ENCODE measurements at regions of chr7 and their contacts with region 1.

Region 1: GRCh38 chr7:76291343-76292212 is 10.9 kb upstream of the HSPB1 start:
- DNase-seq: peak; percentile 99
- ATAC-seq: peak; percentile 90
- H3K4me3 ChIP-seq: peak overlapping the region; percentile 24 to 47
- H3K27ac ChIP-seq: peak overlapping the region; percentile 96
- H3K4me1 ChIP-seq: peaks cover 54% of the 10 kb centered on the region
- H3K27me3 ChIP-seq: no peaks in the 10 kb centered on the region
- CTCF ChIP-seq: peak; percentile 95

Region 2: DNA sequence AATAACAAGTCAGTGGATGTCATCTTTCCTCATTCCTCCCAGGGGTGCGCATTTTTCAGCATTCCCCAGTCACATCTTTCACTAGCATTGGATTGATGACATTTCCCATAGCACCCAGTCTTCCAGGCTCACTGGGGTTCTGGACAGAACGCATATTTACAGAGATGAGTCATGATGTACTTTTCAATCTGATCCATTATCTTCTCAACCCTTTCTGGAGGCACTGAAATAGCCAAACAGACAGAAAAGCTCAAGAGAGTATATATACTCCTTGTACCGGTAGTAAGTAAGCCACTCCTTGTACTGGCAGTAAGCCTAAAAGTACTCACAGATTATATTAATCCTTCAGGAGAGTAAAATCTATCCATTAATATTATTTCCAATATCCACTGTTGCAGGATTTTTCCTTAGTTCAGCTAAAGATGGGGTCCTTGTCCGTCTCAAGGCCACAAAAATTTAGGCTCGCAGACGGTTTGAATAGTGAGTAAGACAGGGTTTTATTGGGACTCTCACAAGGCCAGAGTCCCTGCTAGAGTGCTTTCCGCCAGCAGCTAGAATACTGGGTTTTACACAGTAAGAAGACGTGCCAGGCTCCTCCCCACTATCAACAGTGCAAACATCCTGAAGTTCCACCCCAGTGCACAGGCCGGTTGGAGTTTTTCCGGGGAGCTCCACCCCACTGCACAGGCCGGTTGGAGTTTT is 182.9 kb before region 1 on chr7:
- CTCF ChIA-PET with region 1: no interaction called
- POLR2A ChIA-PET with region 1: no interaction called
- in situ Hi-C with region 1: no loop called
- intact Hi-C with region 1: no loop called
- DNase-seq: peak; percentile 85
- ATAC-seq: peak; percentile 95
- H3K4me3 ChIP-seq: peak overlapping the region; percentile 42 to 55
- H3K27ac ChIP-seq: peak overlapping the region; percentile 97
- H3K4me1 ChIP-seq: peaks cover 38% of the 10 kb centered on the region
- H3K27me3 ChIP-seq: no peaks in the 10 kb centered on the region
- CTCF ChIP-seq: no peak

Region 3: DNA sequence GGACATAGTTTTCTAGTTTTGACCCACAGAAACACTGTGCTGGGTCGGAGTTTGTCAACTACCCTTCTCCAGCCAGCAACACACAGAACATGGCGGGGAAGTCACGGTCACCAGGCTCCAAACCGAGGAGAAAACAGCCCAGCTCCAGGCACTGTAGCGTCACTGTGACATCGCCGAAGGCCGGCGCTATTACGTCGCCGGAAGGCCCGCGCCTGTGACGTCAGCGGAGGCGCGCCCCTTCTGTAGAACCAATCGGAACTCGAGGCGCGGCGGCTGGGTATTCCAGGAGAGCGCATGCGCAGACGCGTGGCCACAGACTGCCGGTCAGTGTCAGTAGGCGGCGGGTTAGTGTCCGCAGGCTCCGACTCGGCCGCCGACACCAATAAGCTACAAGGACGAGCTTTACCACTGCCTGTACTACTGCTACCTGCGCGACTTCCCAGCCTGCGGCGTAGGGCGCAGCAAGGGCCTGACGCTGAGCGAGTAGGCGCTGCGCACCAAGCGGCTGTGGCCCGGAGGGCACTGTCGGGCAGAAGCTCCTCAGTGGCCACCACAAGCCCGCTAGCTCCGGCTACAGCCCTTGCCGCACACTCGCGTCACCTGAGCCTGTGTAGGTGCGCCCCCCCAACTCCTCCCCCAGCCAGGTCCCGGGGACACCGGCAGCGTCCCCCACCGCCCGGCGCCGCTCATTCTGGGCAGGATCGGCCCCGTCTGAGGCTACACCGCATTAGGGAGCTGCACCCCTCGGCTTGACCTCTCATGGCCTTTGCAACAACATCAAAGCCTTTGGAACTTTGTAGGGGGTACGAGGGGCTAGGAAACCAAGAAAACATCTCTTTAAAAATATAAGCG is 124.9 kb before region 1 on chr7:
- CTCF ChIA-PET with region 1: interaction called, 18 read pairs
- POLR2A ChIA-PET with region 1: no interaction called
- in situ Hi-C with region 1: no loop called
- intact Hi-C with region 1: no loop called
- DNase-seq: peak; percentile 92
- ATAC-seq: peak; percentile 97
- H3K4me3 ChIP-seq: peak overlapping the region; percentile 65 to 75
- H3K27ac ChIP-seq: peak overlapping the region; percentile 85
- H3K4me1 ChIP-seq: no peaks in the 10 kb centered on the region
- H3K27me3 ChIP-seq: no peaks in the 10 kb centered on the region
- CTCF ChIP-seq: no peak

Region 4: DNA sequence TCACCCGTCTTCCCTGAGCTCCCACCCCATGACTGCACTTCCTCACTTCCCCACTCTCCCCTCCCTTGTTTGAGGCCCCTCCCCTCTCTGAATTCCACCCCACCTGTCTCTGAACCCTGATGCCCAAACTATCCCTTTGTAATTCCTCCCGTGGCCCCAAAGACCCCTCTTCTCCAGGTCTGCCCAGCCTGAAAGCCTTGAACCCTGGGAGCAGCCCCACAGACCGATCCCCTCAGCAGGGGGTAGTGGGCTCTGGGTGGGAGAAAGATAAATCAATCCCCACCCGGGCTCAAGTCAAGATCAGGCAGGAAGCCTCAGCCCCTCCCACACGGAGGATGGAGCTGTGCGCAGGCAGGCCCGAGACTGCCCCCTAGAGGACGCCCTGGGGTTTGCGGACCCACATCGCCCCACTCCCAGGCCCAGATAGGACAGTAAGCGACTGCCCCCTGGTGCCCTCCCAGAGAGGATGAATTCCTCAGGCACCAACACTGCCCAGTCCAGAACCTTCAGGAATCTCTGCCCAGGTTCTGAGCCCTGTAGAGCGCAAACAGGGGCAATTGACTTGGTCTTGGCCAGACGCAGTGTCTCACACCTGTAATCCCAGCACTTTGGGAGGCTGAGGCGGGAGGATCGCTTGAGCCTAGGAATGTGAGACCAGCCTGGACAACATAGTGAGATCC is 22.6 kb after region 1 on chr7:
- CTCF ChIA-PET with region 1: interaction called, 23 read pairs
- POLR2A ChIA-PET with region 1: interaction called, 4 read pairs
- in situ Hi-C with region 1: no loop called
- intact Hi-C with region 1: loop called (anchors 1 kb)
- DNase-seq: no peak
- ATAC-seq: peak; percentile 77
- H3K4me3 ChIP-seq: peak overlapping the region in 1 of 2 experiments; percentile 33; a peak in 1 of 4 replicates
- H3K27ac ChIP-seq: peak overlapping the region; percentile 72
- H3K4me1 ChIP-seq: peaks cover 17% of the 10 kb centered on the region
- H3K27me3 ChIP-seq: no peaks in the 10 kb centered on the region
- CTCF ChIP-seq: peak; percentile 100

Region 5: DNA sequence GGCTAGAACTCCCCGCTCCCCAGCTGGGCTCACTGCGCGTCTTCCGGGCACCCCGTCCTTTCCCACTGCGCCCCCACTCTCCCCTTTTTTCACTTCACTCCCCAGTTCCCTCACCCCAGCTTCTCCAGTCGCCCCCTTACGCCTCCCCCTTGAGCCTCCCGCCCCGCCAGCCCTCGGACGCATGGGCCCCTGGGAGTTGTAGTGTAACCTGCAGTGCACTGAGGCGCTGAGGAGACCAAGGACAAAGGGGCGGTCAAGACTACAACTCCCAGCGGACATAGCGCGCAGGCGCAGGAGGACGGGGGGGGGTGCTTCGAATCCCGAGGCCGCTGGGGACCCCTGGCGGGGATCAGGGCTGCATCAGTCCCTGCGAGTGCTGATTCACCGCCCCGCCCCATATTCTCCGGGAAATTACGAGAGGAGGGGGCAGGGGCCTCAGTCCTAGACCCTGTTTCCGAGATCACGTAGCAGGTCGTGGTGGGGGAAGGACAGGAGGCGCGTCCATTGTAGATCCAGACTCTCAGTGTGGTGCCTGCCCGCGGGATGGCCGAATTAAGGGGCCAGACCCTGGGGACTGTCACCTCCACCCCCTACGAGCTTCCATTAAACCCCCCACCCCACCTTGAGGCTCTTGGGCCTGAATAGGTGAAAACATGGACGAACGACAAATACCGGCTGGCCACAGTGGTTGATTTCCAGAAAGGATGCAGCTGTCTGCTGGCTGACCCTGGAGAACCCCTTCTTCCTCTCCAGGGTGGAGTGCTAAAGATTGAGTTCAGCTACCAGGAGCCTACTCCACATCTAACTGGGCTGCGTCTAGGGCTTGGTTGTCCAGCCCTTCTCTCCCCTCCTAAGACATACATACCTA is 67.8 kb after region 1 on chr7:
- CTCF ChIA-PET with region 1: no interaction called
- POLR2A ChIA-PET with region 1: interaction called, 20 read pairs
- in situ Hi-C with region 1: no loop called
- intact Hi-C with region 1: no loop called
- DNase-seq: peak; percentile 97
- ATAC-seq: peak; percentile 98
- H3K4me3 ChIP-seq: peak overlapping the region; percentile 87 to 99
- H3K27ac ChIP-seq: peak overlapping the region; percentile 85
- H3K4me1 ChIP-seq: peaks cover 30% of the 10 kb centered on the region
- H3K27me3 ChIP-seq: no peaks in the 10 kb centered on the region
- CTCF ChIP-seq: peak; percentile 93

Region 6: DNA sequence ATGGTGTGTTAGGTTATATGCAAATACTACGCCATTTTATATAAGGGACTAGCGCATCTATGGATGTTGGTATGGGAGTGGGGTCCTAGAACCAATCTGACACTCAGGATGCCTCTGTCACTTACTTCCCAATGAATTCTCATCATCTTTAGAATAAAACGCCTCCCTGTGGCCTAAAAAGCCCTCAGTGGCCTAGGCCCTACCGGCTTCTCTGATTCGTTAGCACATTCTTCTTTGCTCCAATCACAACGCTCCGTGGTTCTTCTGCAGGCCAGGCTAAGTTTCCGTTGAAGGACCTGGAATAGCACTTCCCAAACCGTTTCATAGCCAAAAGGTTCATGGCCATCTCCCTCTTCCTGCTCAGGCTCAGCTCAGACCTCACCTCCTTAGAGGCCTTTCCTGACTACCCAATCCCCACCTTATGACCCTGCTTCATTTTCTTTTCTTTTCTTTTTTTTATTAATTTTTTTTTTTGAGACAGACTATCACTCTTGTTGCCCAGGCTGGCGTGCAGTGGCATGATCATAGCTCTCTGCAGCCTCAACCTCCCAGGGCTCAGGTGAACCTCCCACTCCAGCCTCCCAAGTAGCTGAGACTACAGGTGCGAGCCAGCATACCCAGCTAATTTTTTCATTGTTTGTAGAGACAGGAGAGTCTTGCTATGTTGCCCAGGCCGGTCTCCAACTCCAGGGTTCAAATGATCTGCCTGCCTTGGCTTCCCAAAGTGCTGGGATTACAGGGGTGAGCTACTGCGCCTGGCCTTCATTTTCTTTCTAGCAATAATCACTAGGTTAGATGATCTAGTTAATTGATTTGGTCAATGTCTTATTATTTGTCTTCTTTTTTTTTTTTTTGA is 91.7 kb after region 1 on chr7:
- CTCF ChIA-PET with region 1: no interaction called
- POLR2A ChIA-PET with region 1: no interaction called
- in situ Hi-C with region 1: no loop called
- intact Hi-C with region 1: no loop called
- DNase-seq: no peak
- ATAC-seq: no peak
- H3K4me3 ChIP-seq: no peak overlapping the region
- H3K27ac ChIP-seq: no peak overlapping the region
- H3K4me1 ChIP-seq: peaks cover 13% of the 10 kb centered on the region
- H3K27me3 ChIP-seq: no peaks in the 10 kb centered on the region
- CTCF ChIP-seq: no peak

Measured in Panc1 (cell line).